ENCODE measurements at regions of chr18 and their contacts with region 1.

Region 1: DNA sequence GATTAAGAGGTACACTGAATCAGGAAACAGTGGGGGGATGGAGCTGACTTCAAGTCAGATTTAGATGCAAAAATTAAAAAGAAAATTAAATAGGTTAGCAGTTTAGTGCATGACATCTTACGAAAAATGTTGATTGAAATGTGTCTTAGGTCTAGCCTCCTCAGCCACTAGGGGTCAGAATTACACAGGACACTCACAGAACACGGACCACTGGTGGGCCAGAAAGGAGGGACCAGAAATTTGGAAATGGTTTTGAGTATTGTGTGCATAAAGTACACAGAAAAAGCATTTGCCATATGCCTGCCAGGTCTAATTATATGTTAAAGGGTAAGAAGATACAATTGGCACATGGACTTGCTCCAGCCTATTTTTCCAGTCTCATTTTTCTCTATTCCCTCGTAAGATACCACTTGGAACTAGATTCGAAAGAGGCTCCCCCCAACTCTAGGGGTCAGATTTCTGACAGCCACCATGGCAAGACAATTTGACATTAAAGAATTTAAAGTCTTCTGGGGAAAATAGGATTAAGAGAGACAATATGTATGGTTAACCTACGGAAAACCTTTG is 550.2 kb upstream of the SETBP1 start:
- H3K4me3 ChIP-seq: no peak overlapping the region
- H3K27ac ChIP-seq: no peak overlapping the region
- H3K4me1 ChIP-seq: no peaks in the 10 kb centered on the region
- CTCF ChIP-seq: peak; percentile 51

Region 2: GRCh38 chr18:44119607-44120006 is 10.9 kb before region 1 on chr18:
- CTCF ChIA-PET with region 1: interaction called, 13 read pairs
- POLR2A ChIA-PET with region 1: no interaction called
- H3K4me3 ChIP-seq: no peak overlapping the region
- H3K27ac ChIP-seq: no peak overlapping the region
- H3K4me1 ChIP-seq: no peaks in the 10 kb centered on the region
- CTCF ChIP-seq: no peak

Region 3: DNA sequence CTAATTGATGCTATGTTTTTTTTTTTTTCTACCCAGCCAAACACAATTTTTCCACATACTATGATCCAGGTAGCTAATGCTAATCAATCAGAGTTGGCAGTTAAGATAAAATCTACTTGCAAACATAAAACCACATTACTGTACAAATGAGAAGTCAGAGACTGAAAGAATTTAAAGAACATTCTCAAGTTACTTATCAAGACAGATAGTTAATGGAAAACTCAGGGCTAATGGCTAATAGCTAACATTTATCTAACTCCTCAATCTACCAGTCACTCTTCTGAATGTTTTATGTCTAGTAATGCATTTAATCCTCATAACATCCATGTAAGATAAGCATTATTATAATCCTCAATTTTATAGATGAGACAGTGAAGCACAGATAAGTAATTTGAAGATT is 12.6 kb after region 1 on chr18:
- CTCF ChIA-PET with region 1: interaction called, 28 read pairs
- POLR2A ChIA-PET with region 1: no interaction called
- H3K4me3 ChIP-seq: no peak overlapping the region
- H3K27ac ChIP-seq: no peak overlapping the region
- H3K4me1 ChIP-seq: no peaks in the 10 kb centered on the region
- CTCF ChIP-seq: no peak

Region 4: GRCh38 chr18:44396550-44396949 is 266.1 kb after region 1 on chr18:
- CTCF ChIA-PET with region 1: no interaction called
- POLR2A ChIA-PET with region 1: no interaction called
- H3K4me3 ChIP-seq: no peak overlapping the region
- H3K27ac ChIP-seq: no peak overlapping the region
- H3K4me1 ChIP-seq: no peaks in the 10 kb centered on the region
- CTCF ChIP-seq: no peak